ENCODE measurements at regions of chr10 and their contacts with region 1.

Region 1: DNA sequence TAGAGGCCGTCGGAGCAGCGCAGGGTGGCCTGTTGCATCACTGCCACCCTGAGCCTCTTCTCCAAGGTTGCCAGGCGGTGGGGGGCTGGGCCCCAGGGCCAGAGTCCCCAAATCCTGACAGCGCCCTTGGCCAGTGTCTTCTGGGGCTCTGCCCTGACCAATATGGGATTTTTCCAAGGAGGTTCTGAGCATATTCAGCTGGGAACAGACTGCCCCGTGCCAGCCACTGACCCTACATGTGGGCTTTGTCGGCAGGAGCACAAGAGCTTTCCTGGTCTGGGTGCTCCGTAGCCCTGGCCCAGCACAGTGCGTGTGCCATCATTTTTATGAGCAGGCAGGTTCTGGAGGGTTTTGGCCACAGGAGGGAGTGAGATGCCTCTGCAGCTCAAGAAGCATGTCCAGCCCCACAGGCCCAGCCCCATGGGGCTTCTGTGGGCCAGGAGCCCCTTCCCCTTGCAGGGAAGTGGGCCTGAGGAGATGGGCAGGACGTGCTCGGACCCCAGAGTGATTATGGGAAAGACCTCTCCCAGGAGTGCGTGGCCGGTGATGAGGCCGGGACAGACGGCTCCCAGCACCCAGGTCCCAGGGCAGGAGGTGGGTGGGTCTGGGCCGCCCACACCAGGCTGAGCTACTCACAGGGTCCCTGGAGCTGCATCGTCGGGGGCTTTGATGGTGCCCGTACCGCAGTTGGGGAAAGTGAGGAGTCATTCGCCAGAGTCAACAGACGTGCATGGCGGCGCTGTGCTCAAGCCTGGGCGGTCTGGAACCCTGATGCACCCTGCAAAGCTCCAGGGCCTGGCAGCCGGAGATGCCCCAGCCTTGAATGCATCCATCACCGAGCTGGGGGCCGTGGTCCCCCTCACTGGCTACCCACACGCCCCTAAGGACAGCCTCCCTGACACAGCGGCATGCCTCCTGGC is 66.6 kb downstream of the PWWP2B start:
- DNase-seq: no peak
- H3K4me3 ChIP-seq: peak overlapping the region in 2 of 3 donors; percentile 1 to 32
- H3K27ac ChIP-seq: peak overlapping the region; percentile 90 to 95
- H3K4me1 ChIP-seq: peaks cover 10 to 14% of the 10 kb centered on the region in 2 donors
- H3K27me3 ChIP-seq: peaks cover 0 to 4% of the 10 kb centered on the region in 2 donors
- CTCF ChIP-seq: no peak
- POLR2A ChIP-seq: no peak

Region 2: GRCh38 chr10:130824230-130825014 is 1639.2 kb before region 1 on chr10:
- intact Hi-C with region 1: no loop called
- DNase-seq: no peak
- H3K4me3 ChIP-seq: no peak overlapping the region
- H3K27ac ChIP-seq: no peak overlapping the region
- H3K4me1 ChIP-seq: no peaks in the 10 kb centered on the region
- H3K27me3 ChIP-seq: no peaks in the 10 kb centered on the region
- CTCF ChIP-seq: no peak
- POLR2A ChIP-seq: no peak

Region 3: DNA sequence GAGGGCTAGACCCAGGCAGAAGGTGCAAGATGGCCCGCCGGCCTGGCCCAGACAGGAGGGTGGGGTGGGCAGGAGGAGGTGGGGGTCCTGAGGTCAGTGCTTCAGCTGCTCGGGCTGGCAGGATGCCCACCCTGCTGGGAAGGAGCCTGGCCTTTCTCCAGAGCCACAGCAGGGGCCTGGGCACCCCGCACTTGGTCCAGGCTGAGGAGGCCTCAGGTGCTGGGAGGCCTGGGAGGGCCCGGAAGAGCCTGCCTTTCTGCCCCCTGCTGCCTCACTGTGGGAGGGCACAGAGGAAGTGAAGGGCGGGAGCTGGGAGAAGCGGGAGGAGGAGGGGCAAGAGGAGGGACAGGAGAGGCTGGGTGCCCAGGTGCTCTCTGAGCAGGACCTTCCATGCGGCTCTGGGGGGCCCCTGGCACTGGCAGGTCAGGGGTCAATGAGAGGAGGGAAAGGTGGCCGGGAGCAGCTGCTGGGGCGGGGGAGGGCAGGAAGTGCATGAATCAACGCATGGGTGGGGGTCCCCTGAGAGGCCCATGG is 16.9 kb before region 1 on chr10:
- intact Hi-C with region 1: no loop called
- DNase-seq: no peak
- H3K4me3 ChIP-seq: no peak overlapping the region
- H3K27ac ChIP-seq: peak overlapping the region; percentile 88 to 92
- H3K4me1 ChIP-seq: peaks cover 6 to 15% of the 10 kb centered on the region in 2 donors
- H3K27me3 ChIP-seq: no peaks in the 10 kb centered on the region
- CTCF ChIP-seq: peak; percentile 30 to 65 (median 40)
- POLR2A ChIP-seq: no peak

Region 4: GRCh38 chr10:132520177-132520811 is 56.7 kb after region 1 on chr10:
- intact Hi-C with region 1: loop called (anchors 10 kb)
- DNase-seq: peak in 1 of 2 donors; percentile 50
- H3K4me3 ChIP-seq: no peak overlapping the region
- H3K27ac ChIP-seq: peak overlapping the region; percentile 90 to 94
- H3K4me1 ChIP-seq: peaks cover 18 to 30% of the 10 kb centered on the region in 2 donors
- H3K27me3 ChIP-seq: peaks cover 0 to 4% of the 10 kb centered on the region in 2 donors
- CTCF ChIP-seq: no peak
- POLR2A ChIP-seq: no peak

Region 5: GRCh38 chr10:132639470-132639869 is 175.9 kb after region 1 on chr10:
- intact Hi-C with region 1: loop called (anchors 1 kb)
- DNase-seq: no peak
- H3K4me3 ChIP-seq: no peak overlapping the region
- H3K27ac ChIP-seq: no peak overlapping the region
- H3K4me1 ChIP-seq: no peaks in the 10 kb centered on the region
- H3K27me3 ChIP-seq: no peaks in the 10 kb centered on the region
- CTCF ChIP-seq: no peak
- POLR2A ChIP-seq: no peak

Measured in breast epithelium (tissue), 4 donors.